ENCODE measurements at regions of chr3 and their contacts with region 1.

Region 1: GRCh38 chr3:62051507-62051906 is 321.8 kb downstream of the FEZF2 start:
- DNase-seq: peak; percentile 6
- H3K4me3 ChIP-seq: no peak overlapping the region
- H3K27ac ChIP-seq: no peak overlapping the region
- H3K4me1 ChIP-seq: no peaks in the 10 kb centered on the region
- CTCF ChIP-seq: peak; percentile 72

Region 2: GRCh38 chr3:62090066-62090465 is 38.6 kb after region 1 on chr3:
- CTCF ChIA-PET with region 1: interaction called, 12 read pairs
- POLR2A ChIA-PET with region 1: interaction called, 3 read pairs
- intact Hi-C with region 1: no loop called
- DNase-seq: no peak
- H3K4me3 ChIP-seq: no peak overlapping the region
- H3K27ac ChIP-seq: no peak overlapping the region
- H3K4me1 ChIP-seq: no peaks in the 10 kb centered on the region
- CTCF ChIP-seq: no peak